GM13976 (cell line): ENCODE measurements at regions of chr19 and their contacts with region 1.

Region 1: DNA sequence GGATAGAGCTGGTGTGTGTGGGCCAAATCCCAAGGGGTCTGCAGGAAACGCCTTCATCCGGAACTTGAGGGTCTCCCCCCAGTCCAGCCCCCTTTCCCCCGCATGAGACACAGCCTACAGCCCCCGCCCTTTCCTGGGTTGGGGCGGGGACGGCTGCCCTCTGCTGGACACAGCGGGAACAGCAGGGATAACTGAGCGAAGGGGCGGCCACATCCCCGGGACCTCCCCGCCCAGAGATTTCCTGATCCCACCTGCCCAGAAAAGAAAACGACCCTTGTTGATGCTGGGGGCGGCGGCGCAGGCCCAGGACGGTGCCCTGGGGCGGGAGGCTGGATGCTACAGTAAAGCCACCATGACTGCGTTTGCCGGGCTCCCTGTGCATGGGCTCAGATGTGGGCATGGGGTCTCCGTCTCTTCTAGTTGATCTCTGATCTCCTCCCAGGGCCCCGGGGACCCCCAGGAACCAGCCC is 14.2 kb downstream of the ONECUT3 start:
- DNase-seq: peak; percentile 92
- CTCF ChIP-seq: peak; percentile 97

Region 2: GRCh38 chr19:1445185-1445931 is 322.1 kb before region 1 on chr19:
- in situ Hi-C with region 1: no loop called
- DNase-seq: peak; percentile 96
- CTCF ChIP-seq: peak; percentile 99

Region 3: DNA sequence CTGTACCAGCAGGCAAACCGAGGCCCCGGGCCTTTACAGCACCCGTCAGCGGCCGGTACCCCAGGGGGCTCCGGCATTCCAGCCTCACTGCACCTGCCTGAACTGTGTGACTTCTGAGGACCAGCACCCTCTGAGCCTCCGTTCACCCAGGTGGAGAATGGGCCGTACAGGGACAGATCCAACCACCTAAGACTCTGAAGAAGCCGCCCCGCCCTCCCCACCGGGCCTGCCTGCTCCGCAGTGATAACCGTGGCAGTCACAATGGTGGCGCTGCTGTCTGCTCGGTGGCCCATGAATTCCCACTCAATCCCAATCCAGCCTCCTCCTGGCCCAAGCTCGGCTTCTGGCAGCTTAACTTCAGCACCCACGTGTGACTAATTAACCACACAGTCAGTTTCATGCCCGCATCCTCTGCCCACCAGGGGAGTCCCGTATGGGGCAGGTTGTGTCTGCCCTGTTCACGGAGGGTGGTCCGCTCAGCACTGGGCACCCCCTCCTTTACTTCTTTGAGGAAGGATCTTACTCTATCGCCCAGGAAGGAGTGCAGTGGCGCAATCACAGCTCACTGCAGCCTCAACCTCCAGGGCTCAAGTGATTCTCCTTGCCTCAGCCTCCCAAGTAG is 118.5 kb before region 1 on chr19:
- in situ Hi-C with region 1: no loop called
- DNase-seq: no peak
- CTCF ChIP-seq: peak; percentile 16

Region 4: GRCh38 chr19:1672038-1672768 is 95.3 kb before region 1 on chr19:
- in situ Hi-C with region 1: loop called (anchors 10 kb)
- DNase-seq: peak; percentile 83
- CTCF ChIP-seq: peak; percentile 84